Left ventricle myocardium inferior (tissue), 1 donor: ENCODE measurements at regions of chr14 and their contacts with region 1.

Region 1: DNA sequence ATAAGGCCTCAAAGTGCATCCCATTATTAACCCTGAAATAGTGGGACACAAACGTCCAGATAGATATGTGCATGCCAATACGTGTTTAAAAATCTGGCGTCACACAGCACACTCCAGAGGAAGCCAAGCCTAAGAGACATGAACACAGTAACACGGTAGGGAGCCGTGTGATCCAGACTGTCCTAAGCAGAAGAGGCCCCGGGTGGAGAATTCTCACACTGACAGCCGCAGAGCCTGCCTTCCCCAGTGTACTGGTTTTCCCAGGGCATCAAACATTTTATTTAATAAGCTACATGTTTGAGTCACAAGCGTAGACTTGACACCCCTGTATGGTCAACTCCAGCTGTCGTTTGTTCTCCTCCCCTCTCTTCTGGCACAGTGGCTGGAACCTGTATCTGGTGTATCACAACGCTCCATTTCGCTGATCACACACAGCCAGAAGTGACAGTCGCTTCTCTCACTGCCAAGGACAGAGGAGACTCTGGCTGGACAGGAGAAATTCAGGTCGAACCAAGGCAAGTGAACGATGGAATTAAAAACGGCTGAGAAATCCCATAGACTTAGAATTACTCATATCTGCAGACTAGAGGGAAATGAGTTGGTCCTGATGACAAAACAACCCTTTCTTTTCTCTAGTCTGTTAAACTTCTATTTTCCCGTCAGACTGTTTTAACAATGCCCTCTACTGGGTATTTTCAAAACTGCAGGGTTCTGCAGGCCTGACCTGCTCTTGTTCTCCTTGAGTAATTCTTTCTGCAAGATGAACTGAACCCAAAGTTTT is 359.9 kb downstream of the RGS6 start:
- DNase-seq: no peak
- H3K4me3 ChIP-seq: peak overlapping the region; percentile 38
- H3K27ac ChIP-seq: no peak overlapping the region
- H3K4me1 ChIP-seq: peaks cover 11% of the 10 kb centered on the region
- H3K27me3 ChIP-seq: no peaks in the 10 kb centered on the region
- CTCF ChIP-seq: peak; percentile 82

Region 2: GRCh38 chr14:71932220-71932981 is 359.7 kb before region 1 on chr14 and contains the start of gene RGS6:
- intact Hi-C with region 1: loop called (anchors 10 kb)
- DNase-seq: peak; percentile 34
- H3K4me3 ChIP-seq: peak within 1 kb of the TSS; percentile 77
- H3K27ac ChIP-seq: peak within 1 kb of the TSS; percentile 70
- H3K4me1 ChIP-seq: peaks cover 34% of the 10 kb centered on the region
- H3K27me3 ChIP-seq: peaks cover 31% of the 10 kb centered on the region
- CTCF ChIP-seq: peak; percentile 60
- total RNA-seq, gene RGS6: 23.0 TPM

Region 3: DNA sequence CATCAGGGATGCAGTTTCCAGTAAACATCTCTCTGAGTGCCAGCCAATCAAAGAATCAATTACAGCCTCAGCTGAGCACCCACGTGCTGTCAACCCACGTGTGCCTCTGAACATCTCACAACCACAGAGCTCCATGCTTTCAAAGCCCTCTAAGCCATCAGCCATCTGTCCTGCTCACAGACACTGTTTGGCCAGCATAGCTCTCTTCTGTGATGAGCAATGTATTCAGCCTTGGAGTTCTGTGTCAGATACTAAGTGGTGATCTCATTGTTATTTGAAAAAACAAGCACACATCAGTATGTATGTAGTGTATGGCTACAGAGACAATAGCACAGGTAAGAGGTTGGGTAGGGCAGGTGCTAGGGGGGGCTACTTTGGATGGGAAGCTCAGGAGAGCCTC is 265.6 kb before region 1 on chr14:
- intact Hi-C with region 1: loop called (anchors 5 kb)
- DNase-seq: no peak
- H3K4me3 ChIP-seq: no peak overlapping the region
- H3K27ac ChIP-seq: no peak overlapping the region
- H3K4me1 ChIP-seq: peaks cover 22% of the 10 kb centered on the region
- H3K27me3 ChIP-seq: no peaks in the 10 kb centered on the region
- CTCF ChIP-seq: no peak

Region 4: GRCh38 chr14:72380456-72380855 is 88.4 kb after region 1 on chr14:
- intact Hi-C with region 1: no loop called
- DNase-seq: no peak
- H3K4me3 ChIP-seq: no peak overlapping the region
- H3K27ac ChIP-seq: no peak overlapping the region
- H3K4me1 ChIP-seq: no peaks in the 10 kb centered on the region
- H3K27me3 ChIP-seq: no peaks in the 10 kb centered on the region
- CTCF ChIP-seq: no peak